ENCODE measurements at regions of chr2 and their contacts with region 1.

Region 1: GRCh38 chr2:38602732-38603401 is at the start of gene HNRNPLL:
- DNase-seq: peak; percentile 99
- ATAC-seq: peak; percentile 95
- total RNA-seq, gene HNRNPLL: 27.0 TPM

Region 2: GRCh38 chr2:38581193-38582147 is 21.4 kb before region 1 on chr2:
- intact Hi-C with region 1: no loop called
- DNase-seq: peak; percentile 39
- ATAC-seq: peak; percentile 82

Region 3: GRCh38 chr2:38720613-38721241 is 117.9 kb after region 1 on chr2:
- intact Hi-C with region 1: loop called (anchors 10 kb)
- DNase-seq: peak; percentile 87
- ATAC-seq: peak; percentile 89